ENCODE measurements at regions of chr3 and their contacts with region 1.

Region 1: DNA sequence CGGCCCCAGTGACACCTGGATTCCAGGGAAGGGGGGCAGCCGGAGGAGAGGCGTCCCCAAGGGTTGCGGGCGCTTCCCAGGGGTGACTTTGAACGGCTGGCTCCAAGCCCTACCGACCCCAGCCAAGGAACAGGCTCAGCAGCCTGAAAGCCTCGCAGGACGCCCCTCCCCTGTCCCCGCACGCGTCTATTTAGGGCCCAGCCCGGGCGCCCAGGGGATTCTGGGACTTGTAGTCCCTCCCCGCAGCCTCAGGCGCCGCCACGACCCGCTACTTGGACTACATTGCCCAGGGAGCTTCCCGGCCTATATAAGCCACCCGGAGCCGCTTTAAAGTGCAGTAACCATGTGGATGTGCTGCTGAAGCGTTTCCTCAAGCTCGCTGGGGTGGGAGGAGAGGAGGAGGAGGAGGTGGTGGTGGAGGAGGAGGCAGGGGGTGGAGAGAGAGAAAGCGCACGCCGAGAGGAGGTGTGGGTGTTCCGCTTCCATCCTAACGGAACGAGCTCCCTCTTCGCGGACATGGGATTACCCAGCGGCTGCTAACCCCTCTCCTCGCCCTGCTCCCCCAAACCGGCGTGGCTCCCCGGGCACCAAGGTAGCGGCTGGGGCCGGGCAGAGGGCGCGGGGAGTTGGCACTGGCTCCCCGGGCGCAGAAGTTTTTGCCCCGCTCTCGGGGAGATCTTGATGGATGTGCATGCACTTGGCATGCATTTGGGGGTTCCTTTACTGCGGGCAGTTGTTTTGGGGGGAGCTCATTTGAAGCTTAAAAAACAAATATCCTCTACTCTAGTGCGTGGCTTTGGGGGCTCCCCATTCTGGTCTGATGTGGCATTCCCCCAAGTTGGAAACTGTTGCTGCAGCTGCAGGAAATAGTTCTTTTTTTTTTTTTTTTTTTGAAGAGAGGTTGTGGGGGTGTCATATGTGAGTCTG is at the start of gene ITPR1:
- DNase-seq: peak; percentile 99
- H3K4me3 Mint-ChIP-seq: peak within 1 kb of the TSS; percentile 92
- H3K27ac Mint-ChIP-seq: peak within 1 kb of the TSS; percentile 91
- H3K4me1 Mint-ChIP-seq: peaks cover 39% of the 10 kb centered on the region
- H3K27me3 Mint-ChIP-seq: peaks cover 33% of the 10 kb centered on the region
- total RNA-seq, gene ITPR1: 84.5 and 85.2 TPM in 2 replicates

Region 2: DNA sequence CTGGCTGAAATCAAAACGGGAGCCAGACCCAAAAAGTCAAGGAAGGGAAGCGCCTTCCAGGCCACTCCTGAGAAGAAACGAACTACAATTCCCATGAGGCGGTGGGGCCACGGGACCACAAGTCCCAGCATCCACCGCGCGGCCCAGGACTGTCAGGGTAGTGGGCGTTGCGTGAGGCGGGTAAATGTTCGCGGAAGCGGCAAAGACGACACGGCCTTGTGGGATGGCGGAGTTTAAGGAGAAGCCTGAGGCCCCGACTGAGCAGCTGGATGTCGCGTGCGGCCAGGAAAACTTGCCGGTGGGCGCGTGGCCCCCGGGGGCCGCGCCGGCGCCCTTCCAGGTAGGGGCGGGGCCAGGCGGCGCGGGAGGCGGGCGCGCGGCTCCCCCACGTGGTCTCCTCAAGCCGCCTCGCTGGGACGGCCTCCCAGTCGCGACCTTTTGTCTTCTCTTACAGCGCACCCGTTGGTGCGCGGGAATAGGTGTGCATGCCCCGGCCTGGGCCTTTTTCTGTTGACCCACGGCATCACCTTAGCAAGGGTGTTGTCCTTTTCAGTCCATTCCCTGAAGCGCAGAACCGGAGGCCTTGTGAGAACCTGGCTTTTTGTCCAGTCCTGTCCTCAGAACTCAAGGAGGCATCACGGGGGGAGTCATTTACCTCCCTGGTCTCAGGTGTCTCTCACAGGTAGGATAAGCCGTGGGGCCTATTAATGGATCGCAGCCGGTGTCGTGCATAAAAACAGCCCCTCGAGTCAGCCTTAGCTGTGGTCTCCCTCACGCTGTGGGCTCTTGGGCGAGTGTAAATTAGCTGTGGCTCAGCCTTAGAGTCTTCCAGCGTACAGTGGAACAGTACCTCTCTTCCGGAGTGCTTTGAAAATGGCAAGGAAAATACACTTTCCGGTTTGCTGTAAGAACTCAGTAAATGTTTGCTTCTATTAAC is 189.8 kb before region 1 on chr3 and contains the start of gene SETMAR:
- intact Hi-C with region 1: loop called (anchors 1 kb)
- DNase-seq: peak; percentile 95
- H3K4me3 Mint-ChIP-seq: peak within 1 kb of the TSS; percentile 92
- H3K27ac Mint-ChIP-seq: peak within 1 kb of the TSS; percentile 98
- H3K4me1 Mint-ChIP-seq: peaks cover 21% of the 10 kb centered on the region
- H3K27me3 Mint-ChIP-seq: peaks cover 2% of the 10 kb centered on the region
- total RNA-seq, gene SETMAR: 17.8 and 18.1 TPM in 2 replicates

Region 3: DNA sequence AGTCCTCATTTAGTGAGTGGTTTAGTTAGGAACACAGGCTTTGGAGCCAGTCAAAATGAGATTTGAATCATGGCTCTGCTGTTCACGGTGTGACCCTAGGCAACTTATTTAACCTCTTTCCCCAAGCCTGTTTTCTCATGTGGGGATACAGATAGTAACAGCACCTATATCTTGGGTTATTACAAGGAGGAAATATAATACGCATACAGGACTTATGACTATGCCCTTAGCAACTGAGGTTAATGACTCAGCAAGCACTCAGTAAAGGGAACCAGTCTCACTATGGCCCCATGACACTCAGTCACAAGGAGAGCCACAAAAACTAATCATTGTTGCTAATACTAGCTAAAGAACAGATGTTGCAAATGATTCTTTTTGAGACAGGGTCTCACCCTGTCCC is 72.2 kb before region 1 on chr3:
- intact Hi-C with region 1: loop called (anchors 1 kb)
- DNase-seq: no peak
- H3K4me3 Mint-ChIP-seq: no peak overlapping the region
- H3K27ac Mint-ChIP-seq: peak overlapping the region; percentile 83
- H3K4me1 Mint-ChIP-seq: peaks cover 23% of the 10 kb centered on the region
- H3K27me3 Mint-ChIP-seq: no peaks in the 10 kb centered on the region

Region 4: DNA sequence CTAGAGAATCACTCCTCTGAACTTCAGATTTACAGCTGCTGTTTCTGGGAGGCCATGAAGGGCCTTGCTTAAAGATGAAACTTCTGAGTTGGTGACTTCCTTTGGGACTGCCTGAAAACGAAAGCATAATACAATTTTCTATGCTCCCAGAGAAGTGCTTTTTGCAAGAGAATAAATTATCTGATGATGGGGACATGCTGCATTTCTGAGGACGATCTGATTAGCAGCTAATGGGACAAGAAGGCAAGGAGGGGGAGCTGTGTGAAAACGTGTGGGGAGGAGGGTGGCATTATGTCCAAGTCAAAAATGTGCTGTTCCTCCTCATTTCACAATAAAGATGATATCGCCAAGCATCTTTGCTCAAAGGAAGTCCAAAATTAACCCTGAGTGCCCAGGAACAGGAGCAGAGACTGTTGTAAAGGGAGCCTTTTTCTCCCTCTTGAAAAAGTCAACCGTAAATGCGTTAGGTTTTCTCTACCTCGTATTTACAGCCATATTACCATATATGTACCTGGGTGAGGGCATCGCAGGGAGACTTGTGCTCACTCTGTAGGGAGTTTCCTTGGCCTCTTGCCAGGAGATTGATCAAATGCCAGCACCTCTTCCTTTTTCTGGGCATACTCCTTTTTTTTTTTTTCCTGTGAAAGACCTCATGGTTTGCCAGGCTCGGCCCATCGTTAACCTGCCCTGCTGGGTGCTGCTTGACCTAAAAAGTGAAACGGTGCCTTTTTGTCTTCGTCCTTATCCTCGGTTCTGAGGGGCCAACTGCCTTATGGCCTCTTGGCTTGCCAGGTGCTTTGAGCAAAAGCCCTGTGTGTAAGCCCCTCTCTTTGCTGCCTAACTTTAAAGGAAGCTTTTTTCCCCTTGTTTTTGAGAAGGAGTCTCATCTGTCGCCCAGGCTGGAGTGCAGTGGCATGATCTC is 11.3 kb after region 1 on chr3:
- intact Hi-C with region 1: loop called (anchors 1 kb)
- DNase-seq: peak; percentile 77
- H3K4me3 Mint-ChIP-seq: peak overlapping the region; percentile 89
- H3K27ac Mint-ChIP-seq: peak overlapping the region; percentile 94
- H3K4me1 Mint-ChIP-seq: peaks cover 50% of the 10 kb centered on the region
- H3K27me3 Mint-ChIP-seq: no peaks in the 10 kb centered on the region

Region 5: DNA sequence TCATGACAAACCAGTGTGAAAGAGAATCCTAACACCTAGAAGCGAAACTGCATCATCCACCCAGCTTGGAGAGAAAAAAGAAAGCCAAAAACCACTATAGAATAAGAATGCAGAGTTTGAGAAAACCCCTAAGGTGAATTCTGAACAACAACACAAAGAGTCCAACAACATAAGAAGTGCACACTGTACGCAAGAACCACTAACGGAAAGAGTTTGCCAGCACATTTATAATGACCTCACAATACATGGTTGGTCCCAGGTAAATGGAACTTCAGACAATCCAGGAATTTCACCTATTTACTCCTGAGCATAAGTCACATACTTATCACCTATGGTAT is 357.6 kb after region 1 on chr3:
- intact Hi-C with region 1: loop called (anchors 10 kb)
- DNase-seq: peak; percentile 87
- H3K4me3 Mint-ChIP-seq: peak overlapping the region; percentile 72
- H3K27ac Mint-ChIP-seq: peak overlapping the region; percentile 99
- H3K4me1 Mint-ChIP-seq: peaks cover 77% of the 10 kb centered on the region
- H3K27me3 Mint-ChIP-seq: no peaks in the 10 kb centered on the region

Region 6: GRCh38 chr3:5122030-5122740 is 628.9 kb after region 1 on chr3 and contains the start of gene ARL8B:
- intact Hi-C with region 1: loop called (anchors 2 kb)
- DNase-seq: peak; percentile 98
- H3K4me3 Mint-ChIP-seq: peak within 1 kb of the TSS; percentile 85
- H3K27ac Mint-ChIP-seq: peak within 1 kb of the TSS; percentile 96
- H3K4me1 Mint-ChIP-seq: peaks cover 23% of the 10 kb centered on the region
- H3K27me3 Mint-ChIP-seq: no peaks in the 10 kb centered on the region
- total RNA-seq, gene ARL8B: 46.8 and 50.4 TPM in 2 replicates